ENCODE measurements at regions of chr5 and their contacts with region 1.

Region 1: DNA sequence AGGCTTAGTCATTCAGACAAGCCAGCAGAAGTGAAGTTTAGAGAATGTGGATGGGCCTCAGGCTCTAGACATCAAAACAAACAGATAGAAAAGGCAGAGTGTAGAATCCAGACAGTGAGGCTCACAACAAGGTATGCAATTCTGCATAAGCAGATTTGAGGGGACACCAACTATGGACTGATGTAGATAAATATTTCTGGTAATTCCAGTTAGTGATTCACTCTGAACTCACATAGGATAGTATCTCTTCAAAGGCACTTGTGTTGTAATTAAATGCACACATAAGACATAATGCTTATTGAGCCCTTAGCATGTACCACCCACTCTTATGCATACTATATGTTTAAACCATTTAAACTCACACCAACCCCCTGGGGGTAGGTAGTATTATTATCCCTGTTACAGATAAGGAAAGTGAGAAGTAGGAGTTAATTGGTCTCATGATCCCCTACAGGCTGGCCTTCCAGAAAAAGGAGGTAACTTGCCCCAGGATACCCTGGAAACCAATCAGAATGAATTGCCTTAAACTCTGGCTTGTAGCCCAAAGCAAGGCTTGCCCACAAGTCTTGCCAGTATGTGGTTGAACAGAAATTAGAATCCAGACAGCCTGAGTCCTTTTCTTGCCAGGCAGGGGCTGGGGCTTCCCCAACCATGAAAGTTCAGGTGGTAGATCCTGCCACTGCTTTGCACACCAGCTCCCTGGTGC is 39.5 kb upstream of the HSPB3 start:
- DNase-seq: no peak
- CTCF ChIP-seq: no peak

Region 2: GRCh38 chr5:54206580-54207229 is 209.3 kb before region 1 on chr5:
- CTCF ChIA-PET with region 1: no interaction called
- POLR2A ChIA-PET with region 1: no interaction called
- DNase-seq: no peak
- CTCF ChIP-seq: no peak

Region 3: DNA sequence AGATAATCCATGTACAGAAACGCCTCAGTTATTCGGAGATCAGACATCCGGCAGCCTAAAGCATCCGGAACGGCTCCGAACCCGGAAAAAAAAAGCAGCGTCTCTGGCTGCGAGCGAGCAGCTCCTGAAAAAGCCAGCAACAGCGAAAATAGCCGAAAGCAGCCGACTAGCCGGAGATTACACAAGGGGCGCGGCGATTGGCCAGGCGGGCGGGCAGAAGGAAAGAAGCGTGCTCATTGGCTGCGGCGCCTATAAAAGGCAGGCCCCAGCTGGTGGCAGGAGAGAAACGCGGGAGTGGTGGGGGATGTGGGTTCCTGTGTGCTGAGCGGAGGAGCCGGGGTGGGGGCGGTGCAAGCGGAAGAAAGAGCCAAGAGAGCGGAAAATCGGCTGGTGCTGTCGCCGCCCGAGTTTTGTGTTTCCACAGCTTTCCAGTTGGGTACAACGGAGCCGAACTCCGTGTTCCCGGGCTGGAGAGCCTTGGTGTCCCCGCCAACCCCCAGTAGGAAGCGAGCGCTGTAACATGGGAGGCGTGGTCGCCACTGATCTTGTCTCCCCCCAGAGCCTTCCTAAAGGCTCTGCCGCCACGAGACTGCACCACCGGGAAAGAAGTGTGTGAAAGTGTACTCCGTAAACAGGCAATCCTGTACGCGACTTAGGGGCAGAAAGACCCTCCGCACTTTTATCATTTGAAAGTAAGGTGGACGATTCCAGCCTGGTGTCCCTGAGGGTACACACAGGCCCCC is 105.4 kb before region 1 on chr5 and contains the start of gene ARL15:
- CTCF ChIA-PET with region 1: interaction called, 10 read pairs
- POLR2A ChIA-PET with region 1: interaction called, 4 read pairs
- DNase-seq: peak; percentile 98
- CTCF ChIP-seq: no peak

Region 4: DNA sequence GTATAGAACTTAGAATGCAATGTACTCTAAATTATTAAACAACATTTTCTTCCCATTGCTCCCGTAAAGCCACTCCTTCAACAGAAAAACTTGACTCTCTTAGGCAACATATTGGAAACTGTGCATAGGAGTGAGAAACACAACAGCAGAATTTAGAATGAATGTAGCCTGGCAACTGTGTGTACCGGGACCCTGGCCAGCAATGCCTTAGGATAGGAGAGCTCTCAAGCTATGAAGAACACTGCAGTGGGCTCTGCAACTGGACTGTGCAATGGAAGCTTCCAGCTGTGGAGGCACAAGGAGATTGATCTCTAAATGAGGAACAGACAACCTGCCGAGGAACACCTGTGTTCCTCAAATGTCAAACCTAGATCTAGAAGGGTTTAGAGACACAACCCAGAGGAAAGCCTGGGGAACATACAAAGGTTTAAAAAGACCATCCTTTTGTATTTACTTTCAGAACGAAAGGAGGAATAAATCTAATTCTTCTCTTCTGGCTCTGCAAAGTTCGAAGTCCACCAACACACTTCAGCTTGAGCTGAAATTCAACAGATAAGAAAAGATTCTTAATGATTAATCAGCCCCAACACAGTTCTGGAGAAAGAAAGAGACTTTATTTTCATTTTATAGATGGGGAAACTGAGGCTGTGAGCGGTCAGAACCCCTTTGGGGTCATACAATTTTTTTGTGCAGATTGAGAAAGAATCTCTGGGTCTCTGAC is 54.2 kb before region 1 on chr5:
- CTCF ChIA-PET with region 1: no interaction called
- POLR2A ChIA-PET with region 1: no interaction called
- DNase-seq: no peak
- CTCF ChIP-seq: no peak

Region 5: DNA sequence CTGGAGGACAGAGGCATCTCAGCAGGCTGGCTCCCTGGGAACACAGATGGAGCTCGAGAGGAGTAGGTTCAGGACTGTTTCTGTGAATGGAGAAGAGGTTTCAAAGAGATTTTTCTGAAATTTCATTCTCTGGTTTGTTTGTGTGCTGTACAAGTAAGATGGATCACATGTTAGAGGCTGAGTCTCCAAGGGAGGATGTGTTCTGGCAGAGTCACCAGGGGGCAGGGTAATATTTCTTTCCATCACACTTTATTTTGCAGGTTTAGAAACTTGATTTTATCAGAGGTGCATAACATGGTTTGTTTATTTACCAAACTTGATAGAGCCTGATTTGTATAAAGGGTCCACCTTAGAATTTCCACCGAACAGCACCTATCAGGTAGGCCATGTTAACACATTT is 36.5 kb before region 1 on chr5:
- CTCF ChIA-PET with region 1: interaction called, 11 read pairs
- POLR2A ChIA-PET with region 1: no interaction called
- DNase-seq: peak; percentile 20
- CTCF ChIP-seq: no peak

Region 6: DNA sequence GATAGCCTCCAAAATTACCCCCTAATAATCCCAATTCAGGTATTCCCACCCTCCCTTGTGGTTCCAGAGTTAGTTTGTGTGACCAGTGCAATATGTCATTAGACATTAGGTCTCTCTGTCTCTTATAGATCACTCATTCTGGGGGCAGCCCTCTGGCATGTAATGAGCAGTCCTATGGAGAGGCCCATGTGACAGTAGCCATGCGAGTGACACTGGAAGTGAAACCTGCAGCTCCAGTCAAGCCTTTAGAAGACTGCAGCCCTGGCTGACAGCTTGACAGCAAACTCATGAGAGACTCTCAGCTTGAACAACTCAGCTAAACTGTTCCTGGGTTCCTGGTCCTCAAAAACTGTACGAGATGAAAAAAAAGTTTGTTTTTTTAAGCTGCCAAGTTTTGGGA is 14.5 kb before region 1 on chr5:
- CTCF ChIA-PET with region 1: interaction called, 20 read pairs
- POLR2A ChIA-PET with region 1: no interaction called
- DNase-seq: peak; percentile 43
- CTCF ChIP-seq: no peak